Activated CD4-positive, alpha-beta T cell treated with anti-CD3 and anti-CD28 coated beads for 36 hours (primary cell): ENCODE measurements at regions of chr2 and their contacts with region 1.

Region 1: DNA sequence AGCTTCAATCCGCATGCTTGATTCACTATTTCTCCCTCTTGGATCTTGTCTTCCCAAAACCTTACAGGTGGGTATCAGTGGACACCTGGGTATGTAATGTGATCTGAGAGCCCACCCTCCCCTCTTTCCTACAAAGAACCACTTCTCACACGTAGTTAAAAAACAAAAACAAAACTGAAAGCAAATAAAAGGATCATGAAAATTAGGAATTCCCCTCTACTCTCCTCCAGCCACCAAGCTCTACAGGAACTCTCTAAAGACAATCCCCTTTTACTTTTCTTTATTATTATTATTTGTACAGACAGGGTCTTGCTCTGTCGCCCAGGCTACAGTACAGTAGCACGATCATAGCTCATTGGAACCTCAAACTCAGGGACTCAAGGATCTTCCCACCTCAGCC is 40.8 kb upstream of the MYO1B start:
- DNase-seq: no peak
- ATAC-seq: peak; percentile 53
- H3K4me3 Mint-ChIP-seq: peak overlapping the region; percentile 42
- H3K27ac Mint-ChIP-seq: peak overlapping the region; percentile 67
- H3K4me1 Mint-ChIP-seq: peaks cover 47% of the 10 kb centered on the region
- H3K27me3 Mint-ChIP-seq: no peaks in the 10 kb centered on the region

Region 2: GRCh38 chr2:191189112-191189635 is 15.3 kb before region 1 on chr2:
- CTCF ChIA-PET with region 1: interaction called, 6 read pairs
- POLR2A ChIA-PET with region 1: no interaction called
- intact Hi-C with region 1: loop called in 1 of 2 experiments (anchors 1 kb)
- DNase-seq: no peak
- ATAC-seq: no peak
- H3K4me3 Mint-ChIP-seq: peak overlapping the region; percentile 19
- H3K27ac Mint-ChIP-seq: peak overlapping the region; percentile 68
- H3K4me1 Mint-ChIP-seq: peaks cover 63% of the 10 kb centered on the region
- H3K27me3 Mint-ChIP-seq: no peaks in the 10 kb centered on the region